ENCODE measurements at regions of chr18 and their contacts with region 1.

Region 1: GRCh38 chr18:70082430-70082829 is 123.1 kb downstream of the RTTN start:
- DNase-seq: no peak
- ATAC-seq: no peak
- H3K4me3 ChIP-seq: no peak overlapping the region
- H3K4me3 Mint-ChIP-seq: no peak overlapping the region
- H3K27ac ChIP-seq: no peak overlapping the region
- H3K27ac Mint-ChIP-seq: no peak overlapping the region
- H3K4me1 ChIP-seq: no peaks in the 10 kb centered on the region
- H3K4me1 Mint-ChIP-seq: no peaks in the 10 kb centered on the region
- H3K27me3 ChIP-seq: no peaks in the 10 kb centered on the region
- H3K27me3 Mint-ChIP-seq: no peaks in the 10 kb centered on the region
- CTCF ChIP-seq: no peak

Region 2: GRCh38 chr18:68680520-68680919 is 1401.9 kb before region 1 on chr18:
- CTCF ChIA-PET with region 1: no interaction called
- POLR2A ChIA-PET with region 1: no interaction called
- intact Hi-C with region 1: loop called in 1 of 2 experiments (anchors 10 kb)
- DNase-seq: no peak
- ATAC-seq: no peak
- H3K4me3 ChIP-seq: no peak overlapping the region
- H3K4me3 Mint-ChIP-seq: no peak overlapping the region
- H3K27ac ChIP-seq: no peak overlapping the region
- H3K27ac Mint-ChIP-seq: no peak overlapping the region
- H3K4me1 ChIP-seq: no peaks in the 10 kb centered on the region
- H3K4me1 Mint-ChIP-seq: no peaks in the 10 kb centered on the region
- H3K27me3 ChIP-seq: no peaks in the 10 kb centered on the region
- H3K27me3 Mint-ChIP-seq: no peaks in the 10 kb centered on the region
- CTCF ChIP-seq: no peak

Region 3: GRCh38 chr18:68703326-68703725 is 1379.1 kb before region 1 on chr18:
- CTCF ChIA-PET with region 1: no interaction called
- POLR2A ChIA-PET with region 1: no interaction called
- intact Hi-C with region 1: loop called in 1 of 2 experiments (anchors 10 kb)
- DNase-seq: no peak
- ATAC-seq: no peak
- H3K4me3 ChIP-seq: no peak overlapping the region
- H3K4me3 Mint-ChIP-seq: no peak overlapping the region
- H3K27ac ChIP-seq: no peak overlapping the region
- H3K27ac Mint-ChIP-seq: no peak overlapping the region
- H3K4me1 ChIP-seq: peaks cover 3% of the 10 kb centered on the region
- H3K4me1 Mint-ChIP-seq: peaks cover 46% of the 10 kb centered on the region
- H3K27me3 ChIP-seq: no peaks in the 10 kb centered on the region
- H3K27me3 Mint-ChIP-seq: no peaks in the 10 kb centered on the region
- CTCF ChIP-seq: no peak

Region 4: DNA sequence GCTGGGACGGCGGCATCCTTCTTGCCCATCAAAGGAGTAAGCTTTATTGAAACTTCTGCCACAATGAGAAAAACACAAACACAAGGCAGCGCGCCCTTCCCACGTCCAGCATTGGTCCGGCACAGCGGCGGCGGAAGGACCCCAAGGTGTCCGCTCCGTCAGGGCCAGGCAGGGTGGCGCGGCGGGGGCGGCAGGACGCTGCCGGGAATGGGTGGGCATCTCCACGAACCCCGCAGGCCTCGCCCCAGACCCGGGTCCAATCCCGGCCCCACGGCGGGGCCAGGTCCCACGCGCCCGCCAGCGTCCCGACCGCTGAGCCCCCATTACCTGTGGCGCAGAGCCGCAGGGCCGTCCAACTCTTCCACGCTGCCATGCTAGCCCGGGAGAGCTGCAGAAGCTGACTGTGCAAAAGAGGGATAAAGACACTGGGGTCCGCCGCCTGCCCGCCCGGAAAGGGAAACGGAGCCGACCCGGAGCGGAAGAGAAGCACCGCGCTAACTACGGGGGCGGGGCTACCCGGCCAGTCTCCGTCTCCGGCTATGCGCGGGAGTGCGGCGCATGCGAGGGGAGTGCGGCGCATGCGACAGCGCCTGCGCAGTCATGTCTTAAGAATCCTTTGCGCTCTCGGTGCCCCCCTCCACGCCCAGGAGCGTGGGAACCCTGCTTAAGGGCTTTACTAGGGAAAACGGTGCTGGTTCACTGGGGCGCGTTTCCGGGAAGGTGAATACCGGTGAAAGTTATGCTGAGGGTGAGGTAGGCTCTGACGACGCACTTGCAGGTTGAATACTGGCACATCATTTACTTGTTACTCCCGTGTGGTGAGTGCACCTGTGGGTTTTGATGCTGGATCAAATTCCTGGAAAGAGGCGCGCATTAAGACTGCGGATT is 1367.6 kb before region 1 on chr18 and contains the start of gene TMX3:
- CTCF ChIA-PET with region 1: no interaction called
- POLR2A ChIA-PET with region 1: no interaction called
- intact Hi-C with region 1: loop called in 1 of 2 experiments (anchors 10 kb)
- DNase-seq: peak; percentile 83 to 97 (median 91)
- ATAC-seq: peak; percentile 98
- H3K4me3 ChIP-seq: peak within 1 kb of the TSS; percentile 60 to 81
- H3K4me3 Mint-ChIP-seq: peak within 1 kb of the TSS; percentile 97
- H3K27ac ChIP-seq: peak within 1 kb of the TSS; percentile 57 to 60
- H3K27ac Mint-ChIP-seq: peak within 1 kb of the TSS; percentile 94
- H3K4me1 ChIP-seq: peaks cover 31% of the 10 kb centered on the region
- H3K4me1 Mint-ChIP-seq: peaks cover 50% of the 10 kb centered on the region
- H3K27me3 ChIP-seq: no peaks in the 10 kb centered on the region
- H3K27me3 Mint-ChIP-seq: no peaks in the 10 kb centered on the region
- CTCF ChIP-seq: no peak
- total RNA-seq, gene TMX3: 28.3 to 28.5 TPM

Region 5: DNA sequence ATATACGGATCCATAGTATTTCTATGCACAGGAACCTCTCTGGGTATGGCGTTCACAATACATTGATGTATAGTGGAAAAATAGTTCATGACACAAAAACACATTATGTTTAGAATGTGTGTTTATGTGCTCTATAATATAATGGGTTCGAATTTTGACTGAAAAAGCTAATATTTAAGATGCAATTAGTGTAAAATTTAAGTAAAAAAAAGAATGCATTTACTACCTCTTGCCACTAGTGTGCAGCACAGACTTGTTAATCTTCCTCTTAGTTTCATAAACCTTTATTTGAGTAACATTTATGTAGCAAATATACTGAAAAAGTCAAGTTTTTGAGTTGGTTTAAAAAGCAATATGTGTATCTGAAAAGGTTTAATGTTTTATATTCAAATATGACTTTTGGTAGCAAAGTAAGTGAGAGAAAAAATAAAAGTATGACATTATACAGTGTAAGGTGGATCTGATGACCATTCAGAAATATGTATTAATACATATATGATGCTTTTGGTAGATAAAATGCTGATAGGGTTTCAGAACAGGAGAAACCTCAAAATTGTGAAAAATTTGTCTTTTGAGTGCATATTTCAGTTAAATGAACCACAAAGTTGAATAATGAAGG is 1235.1 kb before region 1 on chr18:
- CTCF ChIA-PET with region 1: interaction called, 4 read pairs
- POLR2A ChIA-PET with region 1: no interaction called
- intact Hi-C with region 1: loop called (anchors 1 to 2 kb)
- DNase-seq: peak in 2 of 9 experiments; percentile 8 to 29
- ATAC-seq: no peak
- H3K4me3 ChIP-seq: no peak overlapping the region
- H3K4me3 Mint-ChIP-seq: no peak overlapping the region
- H3K27ac ChIP-seq: no peak overlapping the region
- H3K27ac Mint-ChIP-seq: no peak overlapping the region
- H3K4me1 ChIP-seq: no peaks in the 10 kb centered on the region
- H3K4me1 Mint-ChIP-seq: no peaks in the 10 kb centered on the region
- H3K27me3 ChIP-seq: no peaks in the 10 kb centered on the region
- H3K27me3 Mint-ChIP-seq: no peaks in the 10 kb centered on the region
- CTCF ChIP-seq: peak; percentile 70

Region 6: GRCh38 chr18:69469444-69469919 is 612.9 kb before region 1 on chr18:
- CTCF ChIA-PET with region 1: no interaction called
- POLR2A ChIA-PET with region 1: no interaction called
- intact Hi-C with region 1: loop called in 1 of 2 experiments (anchors 5 kb)
- DNase-seq: peak in 4 of 9 experiments; percentile 6 to 58 (median 34)
- ATAC-seq: peak; percentile 80
- H3K4me3 ChIP-seq: no peak overlapping the region
- H3K4me3 Mint-ChIP-seq: no peak overlapping the region
- H3K27ac ChIP-seq: no peak overlapping the region
- H3K27ac Mint-ChIP-seq: no peak overlapping the region
- H3K4me1 ChIP-seq: no peaks in the 10 kb centered on the region
- H3K4me1 Mint-ChIP-seq: no peaks in the 10 kb centered on the region
- H3K27me3 ChIP-seq: no peaks in the 10 kb centered on the region
- H3K27me3 Mint-ChIP-seq: peaks cover 3% of the 10 kb centered on the region
- CTCF ChIP-seq: peak; percentile 23

Region 7: DNA sequence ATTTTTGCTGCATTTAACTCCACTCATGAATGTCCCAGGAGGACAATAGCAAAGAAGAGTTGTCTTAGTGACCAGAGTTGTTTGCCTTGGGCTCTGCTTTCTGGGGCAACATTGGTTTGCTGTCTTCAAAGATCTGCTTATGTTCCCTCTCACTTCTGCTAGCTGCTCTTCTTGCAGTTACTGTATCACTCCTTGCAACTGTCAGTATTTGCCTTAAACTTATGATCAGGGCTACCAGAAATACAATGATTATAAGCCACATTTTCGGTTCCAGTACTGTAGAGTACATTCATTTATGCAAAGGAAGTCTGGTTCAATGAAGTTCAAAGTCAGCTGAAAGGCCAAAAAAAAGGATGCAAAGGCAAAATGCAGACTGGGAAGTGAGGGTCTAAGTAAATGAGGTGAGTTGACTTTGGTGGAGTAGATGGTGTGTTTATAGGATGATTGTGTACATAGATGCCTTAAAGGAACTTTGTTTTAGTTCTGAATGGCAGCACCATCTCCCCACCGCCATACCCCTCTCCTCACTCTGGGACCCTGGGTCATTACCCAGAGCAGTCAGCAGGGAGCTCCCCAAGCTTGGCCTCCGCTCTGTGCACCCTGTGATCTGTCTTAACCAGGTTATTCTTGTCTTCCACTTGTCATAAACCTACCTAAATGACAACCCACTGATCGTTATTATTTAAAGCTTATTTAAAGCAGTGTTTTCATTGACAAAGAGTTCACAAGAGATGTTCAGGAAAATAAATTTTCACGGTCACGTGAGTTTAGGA is 445.7 kb before region 1 on chr18:
- CTCF ChIA-PET with region 1: interaction called, 19 read pairs
- POLR2A ChIA-PET with region 1: no interaction called
- intact Hi-C with region 1: loop called (anchors 1 kb)
- DNase-seq: peak in 3 of 9 experiments; percentile 6 to 43 (median 28)
- ATAC-seq: peak; percentile 62
- H3K4me3 ChIP-seq: no peak overlapping the region
- H3K4me3 Mint-ChIP-seq: no peak overlapping the region
- H3K27ac ChIP-seq: no peak overlapping the region
- H3K27ac Mint-ChIP-seq: no peak overlapping the region
- H3K4me1 ChIP-seq: no peaks in the 10 kb centered on the region
- H3K4me1 Mint-ChIP-seq: no peaks in the 10 kb centered on the region
- H3K27me3 ChIP-seq: no peaks in the 10 kb centered on the region
- H3K27me3 Mint-ChIP-seq: peaks cover 2% of the 10 kb centered on the region
- CTCF ChIP-seq: peak; percentile 26

Region 8: DNA sequence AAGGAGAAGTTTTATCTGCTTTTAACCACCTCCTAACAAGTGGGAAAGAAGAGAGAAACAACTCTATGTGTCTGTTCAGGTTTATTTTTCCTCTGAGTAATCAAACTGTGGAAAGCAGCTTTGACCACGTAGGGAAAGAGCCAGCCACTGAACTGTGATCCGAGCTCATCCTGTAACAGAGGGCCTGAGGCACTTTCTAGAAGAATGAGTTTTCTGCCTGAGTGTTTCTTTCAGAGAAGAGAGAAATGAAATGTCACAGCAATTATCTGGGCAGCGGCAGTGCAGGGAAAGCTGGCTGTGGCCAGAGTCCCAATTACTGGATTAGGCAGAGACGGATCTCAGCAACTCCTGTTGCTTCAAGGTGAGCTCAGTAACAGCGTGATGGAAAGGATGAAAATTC is 286.6 kb before region 1 on chr18:
- CTCF ChIA-PET with region 1: no interaction called
- POLR2A ChIA-PET with region 1: no interaction called
- intact Hi-C with region 1: no loop called
- DNase-seq: no peak
- ATAC-seq: no peak
- H3K4me3 ChIP-seq: no peak overlapping the region
- H3K4me3 Mint-ChIP-seq: no peak overlapping the region
- H3K27ac ChIP-seq: no peak overlapping the region
- H3K27ac Mint-ChIP-seq: no peak overlapping the region
- H3K4me1 ChIP-seq: no peaks in the 10 kb centered on the region
- H3K4me1 Mint-ChIP-seq: no peaks in the 10 kb centered on the region
- H3K27me3 ChIP-seq: no peaks in the 10 kb centered on the region
- H3K27me3 Mint-ChIP-seq: no peaks in the 10 kb centered on the region
- CTCF ChIP-seq: no peak

Region 9: GRCh38 chr18:69898241-69898861 is 184.1 kb before region 1 on chr18:
- CTCF ChIA-PET with region 1: no interaction called
- POLR2A ChIA-PET with region 1: no interaction called
- intact Hi-C with region 1: no loop called
- DNase-seq: peak in 6 of 9 experiments; percentile 16 to 65 (median 34)
- ATAC-seq: peak; percentile 28
- H3K4me3 ChIP-seq: peak overlapping the region; percentile 25 to 28
- H3K4me3 Mint-ChIP-seq: peak overlapping the region; percentile 82
- H3K27ac ChIP-seq: peak overlapping the region; percentile 25 to 88
- H3K27ac Mint-ChIP-seq: peak overlapping the region; percentile 94
- H3K4me1 ChIP-seq: peaks cover 31% of the 10 kb centered on the region
- H3K4me1 Mint-ChIP-seq: peaks cover 72% of the 10 kb centered on the region
- H3K27me3 ChIP-seq: no peaks in the 10 kb centered on the region
- H3K27me3 Mint-ChIP-seq: no peaks in the 10 kb centered on the region
- CTCF ChIP-seq: no peak